Heart left ventricle (tissue), 16 donors: ENCODE measurements at regions of chr6 and their contacts with region 1.

Region 1: DNA sequence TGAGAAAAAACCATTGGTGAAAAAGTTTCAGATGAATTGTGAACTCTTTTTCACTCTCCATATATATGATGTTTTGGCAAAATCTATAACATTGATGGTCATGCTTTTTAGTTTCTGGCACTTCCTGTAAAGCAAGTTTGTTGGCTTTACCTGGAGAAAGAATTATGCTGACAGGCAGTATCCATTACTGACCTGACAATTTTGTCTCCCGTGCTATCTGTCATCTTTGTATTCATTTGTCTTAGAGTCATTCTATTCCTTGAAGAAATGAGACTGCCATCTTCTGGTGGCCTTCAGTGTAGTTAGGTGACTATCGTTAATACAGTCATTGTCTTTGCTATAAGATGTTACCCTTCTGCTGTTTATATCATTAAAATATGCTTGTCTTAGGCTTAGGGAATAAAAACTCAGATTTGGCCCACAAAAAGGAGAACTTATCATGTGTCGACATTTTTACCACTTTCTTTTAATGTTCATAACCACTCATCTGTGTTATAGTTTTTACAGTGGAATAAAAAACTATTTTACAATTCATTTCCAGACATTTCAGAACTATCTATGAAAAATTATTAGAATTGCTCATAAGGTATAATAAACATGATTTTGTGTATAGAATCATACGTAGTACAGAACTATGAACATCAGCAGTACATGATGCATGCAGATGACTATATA is 707.0 kb downstream of the EPM2A start:
- DNase-seq: no peak
- ATAC-seq: peak in 1 of 4 donors; percentile 67
- H3K4me3 ChIP-seq: no peak overlapping the region
- H3K27ac ChIP-seq: no peak overlapping the region
- H3K4me1 ChIP-seq: peaks cover 0 to 6% (median 0%) of the 10 kb centered on the region in 12 donors
- H3K27me3 ChIP-seq: no peaks in the 10 kb centered on the region
- CTCF ChIP-seq: peak in 11 of 12 donors; percentile 14 to 60 (median 43)
- POLR2A ChIP-seq: no peak

Region 2: GRCh38 chr6:144989319-144990107 is 38.8 kb before region 1 on chr6:
- intact Hi-C with region 1: loop called in 1 of 10 experiments (anchors 1 kb)
- DNase-seq: no peak
- ATAC-seq: no peak
- H3K4me3 ChIP-seq: no peak overlapping the region
- H3K27ac ChIP-seq: no peak overlapping the region
- H3K4me1 ChIP-seq: no peaks in the 10 kb centered on the region
- H3K27me3 ChIP-seq: peaks cover 0 to 3% (median 0%) of the 10 kb centered on the region in 9 donors
- CTCF ChIP-seq: no peak
- POLR2A ChIP-seq: no peak

Region 3: GRCh38 chr6:145453376-145453775 is 425.1 kb after region 1 on chr6:
- intact Hi-C with region 1: no loop called
- DNase-seq: no peak
- ATAC-seq: no peak
- H3K4me3 ChIP-seq: no peak overlapping the region
- H3K27ac ChIP-seq: no peak overlapping the region
- H3K4me1 ChIP-seq: no peaks in the 10 kb centered on the region
- H3K27me3 ChIP-seq: no peaks in the 10 kb centered on the region
- CTCF ChIP-seq: peak in 4 of 12 donors; percentile 15 to 29 (median 24)
- POLR2A ChIP-seq: no peak

Region 4: GRCh38 chr6:146111881-146112450 is 1083.7 kb after region 1 on chr6:
- intact Hi-C with region 1: no loop called
- DNase-seq: no peak
- ATAC-seq: peak in 1 of 4 donors; percentile 20
- H3K4me3 ChIP-seq: no peak overlapping the region
- H3K27ac ChIP-seq: no peak overlapping the region
- H3K4me1 ChIP-seq: peaks cover 0 to 13% (median 0%) of the 10 kb centered on the region in 12 donors
- H3K27me3 ChIP-seq: no peaks in the 10 kb centered on the region
- CTCF ChIP-seq: no peak
- POLR2A ChIP-seq: no peak